ENCODE measurements at regions of chr17 and their contacts with region 1.

Region 1: GRCh38 chr17:13490906-13491482 is 110.7 kb downstream of the HS3ST3A1 start:
- DNase-seq: no peak
- H3K4me3 ChIP-seq: no peak overlapping the region
- CTCF ChIP-seq: no peak
- POLR2A ChIP-seq: no peak

Region 2: DNA sequence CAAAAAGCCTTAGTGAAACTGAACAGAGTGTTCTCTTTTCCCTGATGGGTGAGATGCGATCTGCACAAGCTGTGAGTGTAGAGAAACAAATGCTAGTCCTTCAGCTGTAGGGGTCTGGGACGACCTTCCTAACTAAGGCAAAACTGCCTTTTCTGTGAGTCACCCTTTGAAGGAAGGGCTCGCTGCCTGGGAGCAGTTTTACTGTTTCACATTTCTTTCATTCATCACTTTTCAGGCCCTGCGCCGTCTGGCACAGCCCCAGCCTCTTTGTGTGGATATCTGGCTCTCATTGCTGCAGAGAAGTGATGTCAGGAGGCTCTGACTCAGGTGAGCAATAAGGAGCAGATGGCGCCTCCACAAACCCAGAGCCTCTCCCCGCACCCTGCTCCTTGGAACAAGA is 53.3 kb after region 1 on chr17:
- intact Hi-C with region 1: loop called (anchors 5 kb)
- DNase-seq: peak; percentile 15 to 74
- H3K4me3 ChIP-seq: no peak overlapping the region
- CTCF ChIP-seq: no peak
- POLR2A ChIP-seq: no peak